ENCODE measurements at regions of chr11 and their contacts with region 1.

Region 1: GRCh38 chr11:115504276-115505158 is at the start of gene CADM1:
- DNase-seq: peak; percentile 94 to 97 (median 97)
- ATAC-seq: peak; percentile 97 to 98
- H3K4me3 ChIP-seq: peak within 1 kb of the TSS; percentile 47
- H3K27ac ChIP-seq: peak within 1 kb of the TSS; percentile 69
- H3K4me1 ChIP-seq: no peaks in the 10 kb centered on the region
- H3K27me3 ChIP-seq: no peaks in the 10 kb centered on the region
- total RNA-seq, gene CADM1: 25.4 to 42.6 (median 35.5) TPM

Region 2: DNA sequence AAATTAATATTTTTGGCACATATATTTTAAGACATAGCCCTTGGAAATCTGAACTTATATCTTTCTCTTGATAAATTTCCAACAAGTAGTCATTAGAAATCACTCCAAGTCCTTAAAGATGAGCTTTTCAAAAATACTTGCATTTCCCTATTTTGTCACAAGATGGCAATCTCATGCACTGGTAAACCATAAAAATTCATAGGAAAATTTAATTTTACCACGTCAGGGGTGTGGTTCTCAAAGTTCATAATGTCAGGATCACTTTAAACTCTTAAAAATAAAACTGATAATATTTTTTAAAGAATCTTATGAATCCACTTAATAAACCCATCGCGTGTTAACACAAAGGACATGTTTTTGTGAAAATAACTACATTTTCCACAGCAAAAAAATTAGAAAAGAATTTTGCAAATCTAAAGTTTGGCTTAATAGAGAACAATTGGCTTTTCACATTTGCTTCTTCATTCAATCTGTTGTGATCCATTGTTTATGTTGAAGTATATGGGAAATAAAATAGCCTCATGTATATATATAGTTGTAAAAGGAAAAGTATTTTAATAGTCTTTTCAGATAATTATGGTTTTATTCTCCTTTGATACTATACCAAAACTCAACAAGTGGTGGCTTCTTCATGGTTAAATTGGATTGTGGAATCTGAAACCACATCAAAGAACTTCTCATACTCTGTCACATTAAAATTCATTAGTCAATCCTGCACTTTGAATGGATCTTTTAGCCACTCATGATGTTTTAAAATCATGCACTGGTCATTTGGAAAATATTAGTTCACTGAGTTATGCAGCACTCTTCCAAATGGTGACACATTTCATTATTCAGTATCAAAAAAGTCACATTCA is 169.4 kb before region 1 on chr11:
- intact Hi-C with region 1: loop called (anchors 5 to 10 kb)
- DNase-seq: no peak
- ATAC-seq: no peak
- H3K4me3 ChIP-seq: no peak overlapping the region
- H3K27ac ChIP-seq: no peak overlapping the region
- H3K4me1 ChIP-seq: no peaks in the 10 kb centered on the region
- H3K27me3 ChIP-seq: no peaks in the 10 kb centered on the region

Region 3: DNA sequence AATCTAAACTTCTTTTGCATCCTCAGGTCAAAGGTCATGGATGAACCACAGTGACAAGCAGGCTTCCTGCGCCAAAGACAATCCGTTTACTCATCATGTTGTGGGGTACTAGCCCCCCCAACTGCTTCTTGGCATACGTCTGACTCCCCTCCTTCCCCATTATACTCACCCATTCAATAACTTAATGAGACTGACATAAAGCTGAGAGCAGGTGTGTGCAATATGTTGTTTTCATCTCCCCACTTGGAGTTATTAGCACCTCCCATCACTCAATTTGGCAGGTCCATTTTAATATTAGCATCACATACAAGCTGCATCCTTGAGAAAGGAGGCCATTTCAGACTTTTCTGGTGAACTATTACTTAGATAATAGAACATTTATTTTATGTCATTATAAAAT is 157.4 kb before region 1 on chr11:
- intact Hi-C with region 1: loop called in 2 of 4 experiments (anchors 5 to 10 kb)
- DNase-seq: no peak
- ATAC-seq: no peak
- H3K4me3 ChIP-seq: no peak overlapping the region
- H3K27ac ChIP-seq: no peak overlapping the region
- H3K4me1 ChIP-seq: no peaks in the 10 kb centered on the region
- H3K27me3 ChIP-seq: no peaks in the 10 kb centered on the region

Region 4: DNA sequence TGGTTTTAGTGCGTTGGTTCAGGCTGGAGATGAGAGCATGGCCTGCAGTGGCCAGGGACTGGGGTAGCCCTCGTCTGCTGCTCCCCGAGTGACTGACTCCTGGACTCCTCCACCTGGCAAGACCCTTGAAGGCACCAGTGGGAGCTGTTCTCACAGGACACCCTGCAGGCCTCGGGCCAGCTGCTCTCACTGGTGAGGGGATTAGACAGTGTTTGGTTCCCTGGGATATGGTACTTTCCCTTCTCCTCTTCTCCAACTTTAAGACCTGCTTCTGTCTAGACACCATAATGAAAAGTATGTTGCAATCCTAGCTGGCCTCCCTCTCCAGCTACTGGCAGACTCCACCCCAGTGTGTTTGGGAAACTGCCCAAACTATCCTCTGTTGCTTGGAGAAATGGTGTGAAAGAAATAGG is 168.5 kb after region 1 on chr11:
- intact Hi-C with region 1: loop called in 1 of 4 experiments (anchors 10 kb)
- DNase-seq: peak; percentile 57 to 77 (median 74)
- ATAC-seq: peak; percentile 86 to 87
- H3K4me3 ChIP-seq: no peak overlapping the region
- H3K27ac ChIP-seq: no peak overlapping the region
- H3K4me1 ChIP-seq: no peaks in the 10 kb centered on the region
- H3K27me3 ChIP-seq: no peaks in the 10 kb centered on the region

Region 5: GRCh38 chr11:115736146-115736545 is 231.6 kb after region 1 on chr11:
- intact Hi-C with region 1: no loop called
- DNase-seq: no peak
- ATAC-seq: no peak
- H3K4me3 ChIP-seq: no peak overlapping the region
- H3K27ac ChIP-seq: no peak overlapping the region
- H3K4me1 ChIP-seq: no peaks in the 10 kb centered on the region
- H3K27me3 ChIP-seq: no peaks in the 10 kb centered on the region

Region 6: DNA sequence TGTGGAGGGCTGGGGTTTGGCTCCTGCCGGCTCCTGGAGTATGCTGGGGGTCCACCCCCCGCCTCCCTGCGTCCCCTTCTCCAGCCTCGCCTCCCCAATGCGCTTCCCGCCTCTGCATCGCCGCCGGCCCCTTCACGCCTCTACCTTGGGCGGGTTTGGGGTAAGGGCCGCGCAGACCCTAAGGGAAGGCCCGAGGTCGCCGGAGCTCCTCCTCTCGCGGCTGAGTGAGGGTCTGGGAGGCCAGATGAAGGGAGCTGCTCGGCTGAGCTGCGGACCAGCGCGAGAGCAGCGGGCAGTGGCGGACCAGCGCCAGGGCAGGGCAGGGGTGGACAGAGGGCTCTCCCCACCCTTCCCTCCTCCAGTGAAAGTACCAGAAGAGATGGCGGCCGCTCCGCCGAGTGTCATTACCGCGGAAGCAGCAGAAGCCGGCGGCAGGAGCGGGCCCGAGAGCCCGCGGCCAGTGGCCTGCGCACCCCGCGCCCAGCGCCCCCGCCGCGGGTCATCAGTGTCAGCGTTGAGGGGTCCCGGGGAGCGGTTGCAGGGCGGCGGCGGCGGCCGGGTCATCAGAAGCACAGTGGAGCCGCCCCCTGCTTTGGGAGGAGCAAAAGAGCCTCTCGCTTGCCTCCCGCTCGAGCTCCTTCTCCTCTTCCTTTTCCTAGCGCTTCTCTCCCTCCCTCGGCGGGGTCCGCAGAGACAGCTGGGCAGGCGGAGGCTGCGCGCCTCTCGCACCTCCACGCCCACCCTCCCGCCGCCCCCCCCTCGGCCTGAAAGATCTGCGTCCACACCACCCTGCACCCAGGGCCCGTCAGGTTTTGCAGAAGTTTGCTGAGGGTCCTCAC is 255.3 kb after region 1 on chr11:
- intact Hi-C with region 1: loop called in 1 of 4 experiments (anchors 10 kb)
- DNase-seq: peak; percentile 49 to 81 (median 77)
- ATAC-seq: peak; percentile 73 to 81
- H3K4me3 ChIP-seq: peak overlapping the region; percentile 66
- H3K27ac ChIP-seq: no peak overlapping the region
- H3K4me1 ChIP-seq: peaks cover 3% of the 10 kb centered on the region
- H3K27me3 ChIP-seq: no peaks in the 10 kb centered on the region

Region 7: GRCh38 chr11:115848611-115849010 is 344.1 kb after region 1 on chr11:
- intact Hi-C with region 1: no loop called
- DNase-seq: no peak
- ATAC-seq: no peak
- H3K4me3 ChIP-seq: no peak overlapping the region
- H3K27ac ChIP-seq: no peak overlapping the region
- H3K4me1 ChIP-seq: no peaks in the 10 kb centered on the region
- H3K27me3 ChIP-seq: no peaks in the 10 kb centered on the region